Activated T-helper 2 cell treated with anti-CD3 and anti-CD28 coated beads, Interferon-gamma antibody, Interleukin-2, Interleukin-4, amounts not matched to agents 10 μg/mL and 5 μg/mL and 100 μg/mL, durations not matched to agents 14 hours and 24 hours and 36 hours (primary cell): ENCODE measurements at regions of chr4 and their contacts with region 1.

Region 1: DNA sequence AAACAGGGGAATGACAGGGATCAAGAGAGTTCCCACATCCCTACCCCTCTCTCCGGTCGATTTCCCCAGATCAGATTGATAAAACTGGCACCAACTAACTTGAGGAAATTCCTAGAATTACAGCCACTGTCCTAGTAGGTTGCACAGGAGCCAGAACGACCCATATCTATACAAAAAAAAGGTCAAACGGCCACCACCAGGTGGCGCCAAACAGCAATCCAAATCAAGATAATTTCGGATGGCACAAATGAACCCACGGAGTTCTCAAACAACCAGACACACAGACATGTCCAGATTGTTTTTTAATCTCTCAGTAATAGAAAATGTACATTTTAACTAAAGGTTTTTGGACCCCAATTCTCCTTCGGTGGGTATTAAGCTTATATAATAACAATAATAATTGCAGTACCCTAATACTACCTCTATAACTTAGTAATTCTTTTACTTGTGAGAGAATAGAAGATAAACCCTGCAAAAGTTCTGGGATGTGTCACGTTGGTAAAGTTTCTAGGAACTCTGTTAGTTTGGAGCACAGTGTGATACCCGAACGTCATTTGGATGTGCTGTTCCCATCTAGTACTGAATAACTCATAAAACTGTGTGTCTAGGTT is 212.6 kb downstream of the SPOCK3 start:
- DNase-seq: peak; percentile 11
- H3K4me3 Mint-ChIP-seq: no peak overlapping the region
- H3K27ac Mint-ChIP-seq: no peak overlapping the region
- H3K4me1 Mint-ChIP-seq: no peaks in the 10 kb centered on the region
- H3K27me3 Mint-ChIP-seq: no peaks in the 10 kb centered on the region

Region 2: GRCh38 chr4:167290678-167291077 is 269.0 kb after region 1 on chr4:
- intact Hi-C with region 1: loop called (anchors 2 kb)
- DNase-seq: no peak
- H3K4me3 Mint-ChIP-seq: no peak overlapping the region
- H3K27ac Mint-ChIP-seq: no peak overlapping the region
- H3K4me1 Mint-ChIP-seq: no peaks in the 10 kb centered on the region
- H3K27me3 Mint-ChIP-seq: no peaks in the 10 kb centered on the region

Region 3: GRCh38 chr4:167622481-167623246 is 601.0 kb after region 1 on chr4:
- intact Hi-C with region 1: loop called (anchors 1 kb)
- DNase-seq: peak; percentile 11
- H3K4me3 Mint-ChIP-seq: no peak overlapping the region
- H3K27ac Mint-ChIP-seq: no peak overlapping the region
- H3K4me1 Mint-ChIP-seq: no peaks in the 10 kb centered on the region
- H3K27me3 Mint-ChIP-seq: no peaks in the 10 kb centered on the region

Region 4: GRCh38 chr4:168076989-168077725 is 1055.5 kb after region 1 on chr4:
- intact Hi-C with region 1: loop called (anchors 2 kb)
- DNase-seq: peak; percentile 8
- H3K4me3 Mint-ChIP-seq: no peak overlapping the region
- H3K27ac Mint-ChIP-seq: no peak overlapping the region
- H3K4me1 Mint-ChIP-seq: no peaks in the 10 kb centered on the region
- H3K27me3 Mint-ChIP-seq: no peaks in the 10 kb centered on the region

Region 5: GRCh38 chr4:168153596-168154440 is 1132.2 kb after region 1 on chr4:
- intact Hi-C with region 1: loop called (anchors 2 kb)
- DNase-seq: peak; percentile 23
- H3K4me3 Mint-ChIP-seq: no peak overlapping the region
- H3K27ac Mint-ChIP-seq: no peak overlapping the region
- H3K4me1 Mint-ChIP-seq: peaks cover 1% of the 10 kb centered on the region
- H3K27me3 Mint-ChIP-seq: peaks cover 5% of the 10 kb centered on the region